Heart right ventricle (tissue), 16 donors: ENCODE measurements at regions of chr2 and their contacts with region 1.

Region 1: DNA sequence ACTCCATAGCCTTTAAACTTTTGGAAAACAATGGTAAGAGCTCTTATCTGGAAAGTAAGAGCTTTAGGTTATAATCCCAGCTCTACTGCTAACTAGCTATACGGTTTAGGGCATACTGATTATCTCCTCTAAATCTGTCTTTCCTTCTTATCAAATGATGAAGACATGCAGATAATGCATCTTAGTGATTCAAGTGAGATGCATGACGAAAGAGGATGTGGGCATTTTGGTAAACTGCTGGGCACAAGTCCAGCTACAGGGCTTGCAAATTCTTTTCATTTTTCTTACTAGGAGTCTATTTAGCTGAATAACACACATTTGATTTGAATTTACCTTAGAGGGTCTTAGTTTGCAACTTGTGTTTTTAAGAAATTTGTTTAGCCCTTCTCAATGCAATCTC is 1604.8 kb upstream of the ZEB2 start:
- DNase-seq: no peak
- ATAC-seq: no peak
- H3K4me3 ChIP-seq: no peak overlapping the region
- H3K27ac ChIP-seq: no peak overlapping the region
- H3K4me1 ChIP-seq: no peaks in the 10 kb centered on the region
- H3K27me3 ChIP-seq: no peaks in the 10 kb centered on the region
- CTCF ChIP-seq: no peak

Region 2: DNA sequence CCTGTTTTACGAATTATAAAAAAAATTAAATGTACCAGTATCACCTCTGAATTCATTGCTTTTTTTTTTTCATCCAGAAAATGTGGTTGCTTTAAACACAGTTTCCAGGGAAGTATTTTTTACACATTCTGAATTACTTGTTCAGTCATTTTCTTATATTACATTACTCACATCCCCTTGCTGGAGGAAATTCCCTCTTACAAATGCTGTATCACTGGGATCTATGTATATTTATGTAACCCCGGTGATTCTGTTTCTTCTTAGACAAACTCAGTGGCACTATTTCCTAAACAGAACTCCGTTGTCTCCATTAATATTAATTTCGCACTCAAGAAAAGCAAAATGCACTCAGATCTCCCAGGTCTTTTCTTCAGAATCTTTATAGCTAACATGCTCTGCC is 526.3 kb before region 1 on chr2:
- intact Hi-C with region 1: no loop called
- DNase-seq: no peak
- ATAC-seq: no peak
- H3K4me3 ChIP-seq: no peak overlapping the region
- H3K27ac ChIP-seq: no peak overlapping the region
- H3K4me1 ChIP-seq: peaks cover 0 to 13% (median 0%) of the 10 kb centered on the region in 9 donors
- H3K27me3 ChIP-seq: no peaks in the 10 kb centered on the region
- CTCF ChIP-seq: no peak

Region 3: DNA sequence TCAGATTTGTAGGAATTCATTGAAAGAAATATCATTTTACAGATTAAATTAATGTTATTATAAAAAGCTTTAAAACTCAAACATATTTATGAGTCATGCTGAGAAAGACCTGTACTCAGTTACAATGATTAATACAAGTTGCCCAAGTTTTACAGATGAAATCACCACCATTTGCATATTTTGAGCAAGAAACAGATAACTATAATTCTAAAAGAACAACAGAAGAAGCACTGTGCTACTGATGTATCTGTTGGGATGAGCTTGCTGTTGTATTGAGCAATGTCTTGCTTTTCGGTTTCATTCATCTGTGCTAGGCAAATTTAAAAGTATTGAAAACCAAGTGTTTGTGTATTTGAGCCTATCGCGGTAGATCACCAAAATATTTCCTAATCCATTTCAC is 15.7 kb before region 1 on chr2:
- intact Hi-C with region 1: loop called in 1 of 10 experiments (anchors 1 kb)
- DNase-seq: no peak
- ATAC-seq: no peak
- H3K4me3 ChIP-seq: no peak overlapping the region
- H3K27ac ChIP-seq: no peak overlapping the region
- H3K4me1 ChIP-seq: no peaks in the 10 kb centered on the region
- H3K27me3 ChIP-seq: no peaks in the 10 kb centered on the region
- CTCF ChIP-seq: no peak

Region 4: DNA sequence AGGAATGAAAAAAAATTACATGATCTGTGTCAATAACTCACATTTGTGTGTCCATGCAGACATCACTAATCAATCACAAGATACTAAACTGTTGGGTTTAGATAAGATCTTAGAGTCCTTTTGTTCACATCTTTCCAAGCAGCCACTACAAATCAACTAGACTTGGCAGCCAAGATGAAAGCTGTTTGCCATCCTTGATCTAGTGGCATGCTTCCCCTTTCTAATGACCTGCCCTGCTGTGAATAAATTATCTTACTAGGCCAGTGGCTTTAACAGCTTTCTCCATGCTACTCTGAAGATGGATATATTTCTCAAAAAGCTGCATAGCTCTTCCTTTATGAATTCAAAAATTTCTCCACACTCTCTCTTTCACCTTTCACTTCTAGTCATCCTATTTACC is 382.1 kb after region 1 on chr2:
- intact Hi-C with region 1: no loop called
- DNase-seq: no peak
- ATAC-seq: no peak
- H3K4me3 ChIP-seq: no peak overlapping the region
- H3K27ac ChIP-seq: no peak overlapping the region
- H3K4me1 ChIP-seq: no peaks in the 10 kb centered on the region
- H3K27me3 ChIP-seq: no peaks in the 10 kb centered on the region
- CTCF ChIP-seq: no peak